ENCODE measurements at regions of chr18 and their contacts with region 1.

Region 1: GRCh38 chr18:77000527-77000926 is 132.1 kb downstream of the MBP start:
- DNase-seq: peak; percentile 75
- H3K4me3 ChIP-seq: peak overlapping the region in 2 of 4 donors; percentile 20 to 23
- H3K27ac ChIP-seq: no peak overlapping the region
- H3K4me1 ChIP-seq: peaks cover 0 to 6% (median 3%) of the 10 kb centered on the region in 4 donors
- H3K27me3 ChIP-seq: no peaks in the 10 kb centered on the region
- CTCF ChIP-seq: peak; percentile 70 to 98 (median 92)
- EP300 ChIP-seq: no peak
- POLR2A ChIP-seq: no peak

Region 2: DNA sequence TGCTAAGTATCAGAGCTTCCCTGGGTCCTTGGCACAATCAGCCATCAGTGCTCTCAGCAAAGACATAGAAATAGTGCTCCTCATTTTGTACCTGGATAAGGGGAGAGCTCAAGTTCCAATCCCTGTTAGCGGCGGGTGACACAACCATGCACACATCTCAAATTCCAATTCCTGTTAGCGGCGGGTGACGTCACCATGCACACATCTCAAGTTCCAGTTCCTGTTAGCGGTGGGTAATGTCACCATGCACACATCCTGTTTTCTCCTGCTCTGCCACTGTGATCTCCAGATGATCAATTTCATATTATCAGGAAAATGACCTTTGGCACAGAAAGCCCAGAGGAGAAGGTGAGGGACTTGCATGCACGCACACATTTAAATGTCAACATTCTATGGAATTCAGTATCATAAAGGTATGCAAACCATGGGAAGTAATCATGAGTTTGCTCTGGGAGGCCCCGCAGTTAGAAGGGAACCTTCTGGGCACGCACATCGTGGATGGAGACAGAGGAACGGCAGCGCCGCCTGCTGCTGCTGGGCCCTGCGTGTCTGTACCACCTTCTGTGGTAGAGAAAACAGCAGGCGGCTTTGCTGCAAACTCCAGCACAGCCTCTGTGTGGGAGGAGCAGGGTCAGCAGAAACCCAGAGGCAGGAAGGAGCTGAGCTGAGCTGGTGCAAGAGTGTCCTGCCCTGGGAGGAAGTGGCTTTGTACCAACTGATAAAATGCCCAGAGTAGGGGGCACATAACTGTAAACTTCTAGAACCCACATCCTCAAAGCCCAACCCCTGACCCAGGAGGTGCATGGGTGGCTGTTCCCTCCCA is 54.3 kb after region 1 on chr18:
- intact Hi-C with region 1: loop called (anchors 5 kb)
- DNase-seq: peak; percentile 90
- H3K4me3 ChIP-seq: no peak overlapping the region
- H3K27ac ChIP-seq: peak overlapping the region; percentile 57 to 75 (median 66)
- H3K4me1 ChIP-seq: peaks cover 0 to 48% (median 19%) of the 10 kb centered on the region in 4 donors
- H3K27me3 ChIP-seq: no peaks in the 10 kb centered on the region
- CTCF ChIP-seq: peak in 1 of 4 experiments; percentile 17
- EP300 ChIP-seq: no peak
- POLR2A ChIP-seq: no peak

Region 3: GRCh38 chr18:77210249-77210648 is 209.7 kb after region 1 on chr18:
- intact Hi-C with region 1: loop called (anchors 2 kb)
- DNase-seq: no peak
- H3K4me3 ChIP-seq: no peak overlapping the region
- H3K27ac ChIP-seq: no peak overlapping the region
- H3K4me1 ChIP-seq: peaks cover 0 to 18% (median 17%) of the 10 kb centered on the region in 4 donors
- H3K27me3 ChIP-seq: no peaks in the 10 kb centered on the region
- CTCF ChIP-seq: no peak
- EP300 ChIP-seq: no peak
- POLR2A ChIP-seq: no peak

Region 4: DNA sequence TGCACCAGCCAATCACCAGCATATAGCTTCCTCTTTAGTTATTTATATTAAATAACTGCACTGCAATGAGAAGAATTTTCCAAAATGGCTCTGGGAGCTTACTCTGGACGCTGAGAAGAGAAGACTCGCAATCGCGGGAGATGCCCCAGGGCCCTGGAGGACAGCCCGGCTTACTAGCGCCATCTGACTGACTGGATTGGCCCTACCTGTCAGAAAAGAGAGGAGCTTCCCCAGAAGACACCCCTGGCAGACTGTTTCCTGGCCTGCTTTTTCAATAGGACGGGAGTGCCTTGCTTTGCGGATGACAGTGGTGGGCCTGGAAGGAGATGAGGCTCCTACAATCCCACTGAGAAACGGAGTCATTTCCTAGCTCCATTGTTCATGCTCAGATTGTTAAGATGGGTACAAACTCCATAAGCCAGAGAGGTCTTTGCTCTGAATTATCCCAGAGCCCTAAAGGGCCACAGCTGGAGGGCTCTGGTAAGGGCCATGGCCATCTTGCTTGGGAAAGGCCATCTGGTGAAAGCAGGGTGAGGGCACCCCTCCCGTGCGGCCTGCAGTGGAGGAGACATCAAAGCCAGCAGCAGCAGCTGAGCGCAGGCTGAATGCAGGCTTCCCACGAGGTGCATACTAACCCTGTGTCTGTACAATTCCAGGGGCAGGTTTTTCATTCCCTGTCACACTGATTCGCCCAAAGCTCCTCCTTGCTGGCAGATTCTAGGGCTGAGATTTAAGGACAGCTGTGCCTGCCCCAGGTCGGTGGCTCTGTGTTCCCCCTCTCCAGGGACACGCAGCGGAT is 341.2 kb after region 1 on chr18:
- intact Hi-C with region 1: no loop called
- DNase-seq: no peak
- H3K4me3 ChIP-seq: no peak overlapping the region
- H3K27ac ChIP-seq: no peak overlapping the region
- H3K4me1 ChIP-seq: no peaks in the 10 kb centered on the region
- H3K27me3 ChIP-seq: no peaks in the 10 kb centered on the region
- CTCF ChIP-seq: no peak
- EP300 ChIP-seq: no peak
- POLR2A ChIP-seq: no peak

Region 5: DNA sequence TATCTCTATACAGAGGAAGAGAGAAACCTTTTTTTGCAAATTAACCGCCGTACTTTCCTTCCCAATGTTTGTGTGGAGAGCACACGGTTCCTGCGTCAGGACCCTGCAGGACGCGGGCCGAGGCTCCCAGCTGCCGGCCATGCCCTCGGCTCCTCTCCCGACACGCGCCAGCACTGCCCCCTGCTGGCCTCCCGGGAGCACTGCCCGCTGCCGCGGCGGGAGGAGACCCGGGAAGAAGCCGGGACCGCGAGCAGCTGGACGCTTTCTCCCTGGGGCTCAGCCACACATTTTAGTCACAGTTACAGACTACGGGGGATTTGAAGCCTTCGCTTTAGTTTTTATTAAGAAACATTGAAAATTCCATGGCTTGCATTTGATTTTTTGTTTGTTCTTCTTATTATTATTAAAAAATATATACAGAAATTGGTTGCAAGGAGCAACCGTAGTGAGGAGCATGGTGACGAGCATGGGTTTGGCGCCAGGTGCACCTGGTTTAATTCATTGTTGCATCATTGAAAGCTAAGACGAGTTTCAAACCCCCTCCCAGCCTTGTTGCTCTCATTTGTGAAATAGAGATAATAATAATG is 650.4 kb after region 1 on chr18:
- intact Hi-C with region 1: loop called (anchors 2 kb)
- DNase-seq: peak; percentile 87
- H3K4me3 ChIP-seq: peak overlapping the region in 1 of 4 donors; percentile 4
- H3K27ac ChIP-seq: no peak overlapping the region
- H3K4me1 ChIP-seq: peaks cover 0 to 10% (median 2%) of the 10 kb centered on the region in 4 donors
- H3K27me3 ChIP-seq: peaks cover 0 to 9% (median 0%) of the 10 kb centered on the region in 3 donors
- CTCF ChIP-seq: peak; percentile 42 to 73 (median 60)
- EP300 ChIP-seq: no peak
- POLR2A ChIP-seq: no peak

Measured in sigmoid colon (tissue), 7 donors.